ENCODE measurements at regions of chr1 and their contacts with region 1.

Region 1: DNA sequence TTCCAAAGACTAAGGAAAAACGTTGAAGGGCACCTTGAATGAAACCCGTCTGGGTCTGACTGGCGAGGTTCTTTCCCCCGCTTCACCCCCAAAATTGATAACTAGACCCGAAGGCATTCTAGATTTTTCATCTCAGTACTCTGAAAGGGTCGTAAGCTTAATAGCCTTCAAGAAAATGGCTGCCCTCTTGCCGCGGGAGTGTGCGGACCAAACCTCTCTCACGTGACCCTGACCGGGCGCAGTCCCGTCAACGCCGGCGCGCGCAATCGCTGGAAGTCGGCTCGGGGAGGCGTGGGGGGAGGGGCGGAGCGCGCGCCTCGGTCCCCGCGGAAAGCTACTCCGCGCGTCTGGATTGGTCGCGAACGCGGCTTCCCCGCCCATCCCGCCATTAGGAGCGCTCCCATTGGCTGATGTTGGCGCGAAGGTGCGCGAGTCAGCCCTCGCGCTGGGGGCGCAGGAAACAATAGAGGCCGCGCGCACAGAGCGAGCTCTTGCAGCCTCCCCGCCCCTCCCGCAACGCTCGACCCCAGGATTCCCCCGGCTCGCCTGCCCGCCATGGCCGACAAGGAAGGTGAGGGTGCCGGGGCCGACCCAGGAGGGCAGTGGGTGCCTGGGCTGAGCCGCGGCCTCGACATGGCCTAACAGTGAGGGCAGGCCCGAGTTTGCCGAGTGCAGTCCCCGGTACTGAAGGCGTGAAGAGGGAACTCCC is at the start of gene RBBP4:
- DNase-seq: peak; percentile 99 to 100
- ATAC-seq: peak; percentile 82 to 94 (median 84)
- H3K4me3 ChIP-seq: peak within 1 kb of the TSS; percentile 81
- H3K4me3 Mint-ChIP-seq: peak within 1 kb of the TSS; percentile 99
- H3K27ac ChIP-seq: peak within 1 kb of the TSS; percentile 98
- H3K27ac Mint-ChIP-seq: peak within 1 kb of the TSS; percentile 94 to 100
- H3K4me1 ChIP-seq: peaks cover 36% of the 10 kb centered on the region
- H3K4me1 Mint-ChIP-seq: peaks cover 52 to 53% of the 10 kb centered on the region in 2 donors
- H3K27me3 ChIP-seq: no peaks in the 10 kb centered on the region
- H3K27me3 Mint-ChIP-seq: no peaks in the 10 kb centered on the region
- CTCF ChIP-seq: no peak
- total RNA-seq, gene RBBP4: 199 to 241 (median 224) TPM

Region 2: GRCh38 chr1:32332290-32333079 is 318.4 kb before region 1 on chr1:
- intact Hi-C with region 1: no loop called
- DNase-seq: no peak
- ATAC-seq: no peak
- H3K4me3 ChIP-seq: no peak overlapping the region
- H3K4me3 Mint-ChIP-seq: no peak overlapping the region
- H3K27ac ChIP-seq: no peak overlapping the region
- H3K27ac Mint-ChIP-seq: no peak overlapping the region
- H3K4me1 ChIP-seq: peaks cover 24% of the 10 kb centered on the region
- H3K4me1 Mint-ChIP-seq: peaks cover 19 to 37% of the 10 kb centered on the region in 2 donors
- H3K27me3 ChIP-seq: no peaks in the 10 kb centered on the region
- H3K27me3 Mint-ChIP-seq: no peaks in the 10 kb centered on the region
- CTCF ChIP-seq: no peak

Region 3: GRCh38 chr1:32627596-32628162 is 23.2 kb before region 1 on chr1:
- intact Hi-C with region 1: loop called (anchors 1 kb)
- DNase-seq: peak; percentile 51 to 65
- ATAC-seq: peak; percentile 88 to 91 (median 89)
- H3K4me3 ChIP-seq: peak overlapping the region; percentile 13
- H3K4me3 Mint-ChIP-seq: peak overlapping the region; percentile 92
- H3K27ac ChIP-seq: peak overlapping the region; percentile 73
- H3K27ac Mint-ChIP-seq: peak overlapping the region; percentile 93 to 99
- H3K4me1 ChIP-seq: peaks cover 28% of the 10 kb centered on the region
- H3K4me1 Mint-ChIP-seq: peaks cover 31 to 33% of the 10 kb centered on the region in 2 donors
- H3K27me3 ChIP-seq: no peaks in the 10 kb centered on the region
- H3K27me3 Mint-ChIP-seq: no peaks in the 10 kb centered on the region
- CTCF ChIP-seq: no peak

Region 4: DNA sequence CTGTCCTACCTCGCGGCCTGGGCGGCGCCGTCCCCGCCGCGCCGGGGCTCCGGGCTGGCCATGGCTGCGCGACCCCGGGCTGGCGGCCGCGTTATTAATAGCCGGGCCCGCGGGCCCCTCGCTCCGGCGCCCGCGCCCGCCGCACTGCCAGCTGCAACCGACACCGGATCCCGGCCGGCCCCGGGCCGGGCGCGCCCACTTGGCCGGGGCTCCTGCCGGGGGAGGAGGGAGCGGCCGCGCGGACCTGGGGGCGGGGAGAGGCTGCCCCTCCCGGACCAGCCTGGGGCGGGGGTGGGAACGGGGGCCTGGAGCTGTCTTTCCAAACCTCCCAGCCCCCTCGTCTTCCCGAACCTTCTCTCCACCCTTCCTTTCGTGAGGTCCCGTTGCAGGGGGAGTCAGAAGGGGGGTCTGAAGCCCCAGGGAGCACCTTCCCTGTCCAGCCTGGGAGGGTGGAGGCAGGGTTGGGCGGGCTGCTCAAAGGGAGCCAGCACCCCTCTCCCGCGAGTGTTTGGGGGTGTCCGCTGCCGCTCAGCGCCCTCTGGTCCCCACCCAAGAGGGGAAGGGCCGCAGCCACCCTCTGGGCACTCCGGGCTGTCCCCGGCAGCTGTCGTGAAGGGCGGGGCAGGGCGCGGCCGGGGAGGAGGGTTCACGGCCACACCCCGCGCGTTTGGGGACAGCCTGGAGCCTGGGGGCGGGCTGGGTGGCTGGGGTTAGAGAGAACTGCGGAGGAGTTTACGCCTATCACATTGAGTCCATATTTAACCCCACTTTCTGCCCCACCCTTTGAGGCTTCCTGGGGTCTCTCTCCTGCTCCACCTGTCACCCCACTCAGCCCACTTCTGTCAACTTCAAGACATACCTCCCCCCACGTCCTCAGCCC is 51.9 kb after region 1 on chr1 and contains the start of gene SYNC:
- intact Hi-C with region 1: no loop called
- DNase-seq: peak in 1 of 2 donors; percentile 11
- ATAC-seq: peak; percentile 38 to 62 (median 58)
- H3K4me3 ChIP-seq: peak within 1 kb of the TSS; percentile 22
- H3K4me3 Mint-ChIP-seq: peak within 1 kb of the TSS; percentile 72
- H3K27ac ChIP-seq: no peak within 1 kb of the TSS
- H3K27ac Mint-ChIP-seq: peak within 1 kb of the TSS in 1 of 2 donors; percentile 19
- H3K4me1 ChIP-seq: peaks cover 13% of the 10 kb centered on the region
- H3K4me1 Mint-ChIP-seq: peaks cover 7 to 14% of the 10 kb centered on the region in 2 donors
- H3K27me3 ChIP-seq: peaks cover 19% of the 10 kb centered on the region
- H3K27me3 Mint-ChIP-seq: peaks cover 14 to 26% of the 10 kb centered on the region in 2 donors
- CTCF ChIP-seq: no peak
- total RNA-seq, gene SYNC: not detected

Region 5: DNA sequence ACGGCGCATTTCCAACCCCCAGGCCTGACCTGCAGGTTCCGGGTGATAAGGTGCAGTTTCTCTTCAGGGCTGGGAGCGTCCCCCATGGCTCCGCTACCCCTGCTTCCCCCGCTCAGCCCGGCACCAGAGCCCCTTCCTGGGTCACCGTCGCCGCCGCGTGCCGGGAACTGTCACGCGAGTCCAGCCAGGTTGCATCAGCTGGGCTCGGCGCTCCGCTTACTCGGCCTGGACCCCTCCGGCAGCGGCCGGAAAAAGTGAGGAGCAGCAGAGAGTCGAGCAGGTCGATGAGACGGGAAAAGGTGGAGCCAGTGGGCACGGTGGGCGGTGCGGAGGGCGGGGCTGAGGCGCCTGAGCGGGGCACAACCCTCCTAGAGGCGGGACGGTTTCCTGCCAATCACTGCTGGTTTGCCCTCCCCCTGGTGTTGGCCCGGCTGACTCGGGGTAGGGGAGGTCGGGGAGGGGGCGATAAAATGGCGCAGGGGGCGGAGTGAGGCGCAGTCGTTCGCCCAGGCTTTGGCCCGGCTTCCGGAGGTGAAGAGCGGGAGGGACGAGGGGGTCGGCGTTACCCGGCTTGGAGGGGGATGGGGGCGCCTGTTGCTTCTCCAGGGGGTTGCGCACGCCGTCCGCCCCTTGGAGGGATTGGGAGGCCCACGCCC is 166.4 kb after region 1 on chr1 and contains the starts of genes S100PBP and YARS1:
- intact Hi-C with region 1: loop called (anchors 2 kb)
- DNase-seq: peak; percentile 99 to 100
- ATAC-seq: peak; percentile 91 to 99 (median 92)
- H3K4me3 ChIP-seq: peak within 1 kb of the TSS; percentile 82
- H3K4me3 Mint-ChIP-seq: peak within 1 kb of the TSS; percentile 95
- H3K27ac ChIP-seq: peak within 1 kb of the TSS; percentile 81
- H3K27ac Mint-ChIP-seq: peak within 1 kb of the TSS; percentile 82 to 87
- H3K4me1 ChIP-seq: peaks cover 58% of the 10 kb centered on the region
- H3K4me1 Mint-ChIP-seq: peaks cover 62 to 70% of the 10 kb centered on the region in 2 donors
- H3K27me3 ChIP-seq: no peaks in the 10 kb centered on the region
- H3K27me3 Mint-ChIP-seq: no peaks in the 10 kb centered on the region
- CTCF ChIP-seq: no peak
- total RNA-seq, gene S100PBP: 84.5 to 114 (median 85.5) TPM
- total RNA-seq, gene YARS1: 163 to 223 (median 197) TPM

Measured in natural killer cell (primary cell).